ENCODE measurements at regions of chr14 and their contacts with region 1.

Region 1: GRCh38 chr14:74612350-74613021 is 449 bp upstream of the LTBP2 start:
- DNase-seq: peak; percentile 63 to 86 (median 73)
- H3K4me3 ChIP-seq: peak overlapping the region in 3 of 4 donors; percentile 43 to 71 (median 47)
- H3K27ac ChIP-seq: peak overlapping the region in 1 of 5 donors; percentile 46
- H3K4me1 ChIP-seq: peaks cover 0 to 11% of the 10 kb centered on the region in 2 donors
- H3K27me3 ChIP-seq: peaks cover 24% of the 10 kb centered on the region
- CTCF ChIP-seq: peak; percentile 19 to 91 (median 56)
- POLR2A ChIP-seq: no peak

Region 2: DNA sequence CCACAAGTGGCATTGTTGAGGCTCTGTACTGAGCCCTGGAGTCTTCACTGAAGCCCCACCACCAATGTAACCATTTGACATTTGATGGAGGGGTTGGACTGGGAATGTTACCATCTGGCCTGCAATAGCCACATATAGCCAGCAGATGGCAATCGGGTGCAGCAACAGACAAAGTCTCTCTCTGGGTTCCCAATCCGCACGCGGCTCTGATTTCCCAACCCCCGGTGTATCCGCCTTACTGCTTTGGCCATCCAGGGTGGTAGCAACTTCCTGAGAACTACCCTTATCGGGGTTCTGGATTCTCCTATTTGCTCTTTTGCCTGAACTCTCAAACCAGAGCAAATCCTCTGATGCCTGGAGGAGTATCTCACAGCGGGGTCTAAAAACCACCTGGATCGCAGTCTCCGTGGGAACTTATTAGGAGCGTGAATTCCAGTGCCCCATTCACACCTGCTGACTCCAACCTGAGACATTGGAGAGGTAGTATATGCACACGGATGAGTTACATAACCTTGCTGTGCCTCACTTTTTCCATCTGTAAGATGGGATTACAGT is 250.0 kb before region 1 on chr14:
- intact Hi-C with region 1: loop called in 1 of 2 experiments (anchors 10 kb)
- DNase-seq: peak; percentile 77 to 93 (median 88)
- H3K4me3 ChIP-seq: no peak overlapping the region
- H3K27ac ChIP-seq: no peak overlapping the region
- H3K4me1 ChIP-seq: no peaks in the 10 kb centered on the region
- H3K27me3 ChIP-seq: no peaks in the 10 kb centered on the region
- CTCF ChIP-seq: peak; percentile 92 to 97 (median 94)
- POLR2A ChIP-seq: no peak

Region 3: GRCh38 chr14:74501135-74501614 is 111.3 kb before region 1 on chr14:
- intact Hi-C with region 1: loop called in 1 of 2 experiments (anchors 5 kb)
- DNase-seq: peak; percentile 69 to 89 (median 88)
- H3K4me3 ChIP-seq: no peak overlapping the region
- H3K27ac ChIP-seq: no peak overlapping the region
- H3K4me1 ChIP-seq: no peaks in the 10 kb centered on the region
- H3K27me3 ChIP-seq: no peaks in the 10 kb centered on the region
- CTCF ChIP-seq: peak; percentile 53 to 83 (median 74)
- POLR2A ChIP-seq: no peak

Region 4: DNA sequence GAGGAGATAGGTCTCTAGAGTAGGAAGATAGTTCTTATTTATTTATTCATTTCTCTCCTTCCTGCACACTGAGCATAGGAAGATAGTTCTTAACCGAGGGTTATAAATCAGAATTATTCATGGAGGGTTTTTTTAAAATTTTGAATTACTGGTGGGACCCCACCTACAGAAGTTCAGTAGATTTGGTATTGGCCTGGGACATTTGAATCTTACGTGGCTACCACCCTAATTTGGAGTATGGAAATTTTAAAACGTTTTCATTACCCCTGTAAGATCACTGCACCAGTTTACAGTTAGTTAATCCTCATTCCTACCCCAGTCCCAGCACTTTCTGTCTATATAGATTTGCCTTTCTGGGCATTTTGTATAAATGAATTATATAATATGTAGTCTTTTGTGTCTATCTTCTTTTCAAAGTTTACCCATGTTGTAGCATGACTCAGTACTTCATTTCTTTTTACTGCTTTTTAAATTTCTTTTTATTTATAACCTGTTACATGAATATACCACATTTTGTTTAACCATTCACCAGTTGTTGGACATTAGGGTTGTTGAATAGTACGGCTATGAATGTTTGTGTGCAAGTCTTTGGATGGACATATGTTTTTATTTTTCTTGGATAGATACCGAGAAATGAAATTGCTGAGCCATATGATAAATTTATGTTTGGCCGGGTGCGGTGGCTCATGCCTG is 195.5 kb after region 1 on chr14:
- intact Hi-C with region 1: loop called in 1 of 2 experiments (anchors 5 kb)
- DNase-seq: no peak
- H3K4me3 ChIP-seq: no peak overlapping the region
- H3K27ac ChIP-seq: no peak overlapping the region
- H3K4me1 ChIP-seq: no peaks in the 10 kb centered on the region
- H3K27me3 ChIP-seq: no peaks in the 10 kb centered on the region
- CTCF ChIP-seq: no peak
- POLR2A ChIP-seq: no peak

Region 5: GRCh38 chr14:74881431-74882361 is 269.2 kb after region 1 on chr14 and contains the start of gene DLST:
- intact Hi-C with region 1: no loop called
- DNase-seq: peak; percentile 84 to 91 (median 89)
- H3K4me3 ChIP-seq: peak within 1 kb of the TSS; percentile 87 to 100 (median 95)
- H3K27ac ChIP-seq: peak within 1 kb of the TSS; percentile 91 to 99 (median 97)
- H3K4me1 ChIP-seq: peaks cover 18 to 43% of the 10 kb centered on the region in 2 donors
- H3K27me3 ChIP-seq: no peaks in the 10 kb centered on the region
- CTCF ChIP-seq: peak in 1 of 6 experiments; percentile 16
- POLR2A ChIP-seq: peak in 1 of 2 donors; percentile 77
- total RNA-seq, gene DLST: 60.6 to 205 (median 156) TPM

Measured in adrenal gland (tissue), 19 donors.